CD4-positive, alpha-beta T cell (primary cell): ENCODE measurements at regions of chr19 and their contacts with region 1.

Region 1: DNA sequence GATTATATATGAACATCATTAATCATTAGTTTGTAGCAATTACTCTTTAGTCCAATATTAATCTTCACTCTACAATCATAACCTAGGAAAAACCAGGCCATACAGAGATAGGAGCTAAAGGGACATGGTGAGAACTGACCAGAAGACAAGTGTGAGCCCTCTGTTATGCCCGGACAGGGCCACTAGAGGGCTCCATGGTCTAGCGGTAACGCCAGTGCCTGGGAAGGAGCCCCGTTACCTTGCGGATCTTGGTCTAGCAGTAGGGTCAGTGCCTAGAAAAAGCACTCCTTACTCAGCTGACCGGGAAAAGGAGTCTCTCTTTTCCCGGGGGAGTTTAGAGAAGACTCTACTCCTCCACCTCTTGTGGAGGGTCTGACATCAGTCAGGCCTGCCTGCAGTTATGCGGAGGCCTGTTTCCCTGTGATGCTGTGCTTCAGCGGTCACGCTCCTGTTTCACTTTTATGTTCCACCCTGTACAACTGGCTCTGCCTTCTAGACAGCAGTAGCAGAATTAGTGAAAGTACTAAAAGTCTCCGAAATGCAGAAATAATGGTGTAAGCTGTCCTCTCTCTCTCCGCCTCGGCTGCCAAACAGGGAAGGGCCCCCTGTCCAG is 13.8 kb downstream of the OR7D4 start:
- DNase-seq: peak; percentile 40 to 78 (median 58)
- ATAC-seq: peak; percentile 58
- H3K4me3 ChIP-seq: peak overlapping the region; percentile 20
- H3K4me3 Mint-ChIP-seq: peak overlapping the region; percentile 56
- H3K27ac ChIP-seq: no peak overlapping the region
- H3K27ac Mint-ChIP-seq: no peak overlapping the region
- H3K4me1 ChIP-seq: peaks cover 3% of the 10 kb centered on the region
- H3K4me1 Mint-ChIP-seq: no peaks in the 10 kb centered on the region
- H3K27me3 ChIP-seq: no peaks in the 10 kb centered on the region
- H3K27me3 Mint-ChIP-seq: peaks cover 8% of the 10 kb centered on the region
- CTCF ChIP-seq: peak; percentile 96

Region 2: GRCh38 chr19:9584073-9584833 is 378.6 kb after region 1 on chr19 and contains the start of gene ZNF121:
- CTCF ChIA-PET with region 1: no interaction called
- POLR2A ChIA-PET with region 1: no interaction called
- intact Hi-C with region 1: loop called (anchors 1 to 5 kb)
- DNase-seq: peak; percentile 53 to 88 (median 68)
- ATAC-seq: peak; percentile 70
- H3K4me3 ChIP-seq: peak within 1 kb of the TSS; percentile 82
- H3K4me3 Mint-ChIP-seq: peak within 1 kb of the TSS; percentile 98
- H3K27ac ChIP-seq: peak within 1 kb of the TSS; percentile 92 to 93
- H3K27ac Mint-ChIP-seq: peak within 1 kb of the TSS; percentile 98
- H3K4me1 ChIP-seq: peaks cover 23% of the 10 kb centered on the region
- H3K4me1 Mint-ChIP-seq: peaks cover 36% of the 10 kb centered on the region
- H3K27me3 ChIP-seq: no peaks in the 10 kb centered on the region
- H3K27me3 Mint-ChIP-seq: peaks cover 5% of the 10 kb centered on the region
- CTCF ChIP-seq: no peak
- total RNA-seq, gene ZNF121: 42.0 to 42.1 TPM